ENCODE measurements at regions of chr9 and their contacts with region 1.

Region 1: DNA sequence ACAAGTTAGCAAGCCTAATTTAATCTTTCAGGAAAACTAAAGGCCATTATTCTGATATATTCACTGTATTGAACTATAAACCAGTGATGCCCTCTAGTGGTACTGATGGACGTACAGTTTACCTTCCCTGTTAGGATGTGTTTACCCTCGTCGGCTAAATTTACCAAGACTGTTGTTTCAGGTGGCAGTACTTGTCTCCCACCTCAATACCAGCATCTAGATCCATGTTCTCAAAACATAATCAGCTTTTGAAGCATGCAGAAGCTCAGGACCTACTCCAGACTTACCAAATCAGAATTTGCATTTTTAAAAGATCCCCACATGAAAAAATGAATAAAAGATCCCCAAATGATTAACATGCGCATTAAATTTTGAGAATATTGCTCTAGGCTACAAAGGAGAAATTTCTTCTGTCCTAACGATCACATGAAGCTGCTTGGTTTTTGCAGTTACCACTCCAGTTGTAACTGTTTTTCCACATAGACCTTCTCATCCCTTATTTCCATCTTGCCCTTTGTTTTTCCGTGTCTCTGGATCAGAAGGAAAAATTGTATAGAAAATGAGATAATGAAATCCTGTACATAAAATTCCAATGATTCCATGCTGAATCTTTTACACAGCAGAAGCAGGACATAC is 3.2 kb upstream of the BAAT start:
- DNase-seq: peak; percentile 58
- ATAC-seq: peak; percentile 97
- H3K4me3 ChIP-seq: no peak overlapping the region
- H3K27ac ChIP-seq: no peak overlapping the region
- H3K4me1 ChIP-seq: no peaks in the 10 kb centered on the region
- H3K27me3 ChIP-seq: no peaks in the 10 kb centered on the region
- CTCF ChIP-seq: peak; percentile 45 to 75 (median 70); a peak in 5 of 6 replicates
- POLR2A ChIP-seq: no peak
- RAD21 ChIP-seq: peak; percentile 47

Region 2: GRCh38 chr9:101376111-101376848 is 11.7 kb before region 1 on chr9:
- CTCF ChIA-PET with region 1: interaction called, 15 read pairs
- POLR2A ChIA-PET with region 1: no interaction called
- RAD21 ChIA-PET with region 1: no interaction called
- intact Hi-C with region 1: no loop called
- DNase-seq: no peak
- ATAC-seq: no peak
- H3K4me3 ChIP-seq: no peak overlapping the region
- H3K27ac ChIP-seq: no peak overlapping the region
- H3K4me1 ChIP-seq: no peaks in the 10 kb centered on the region
- H3K27me3 ChIP-seq: no peaks in the 10 kb centered on the region
- CTCF ChIP-seq: no peak
- POLR2A ChIP-seq: no peak
- RAD21 ChIP-seq: no peak

Region 3: DNA sequence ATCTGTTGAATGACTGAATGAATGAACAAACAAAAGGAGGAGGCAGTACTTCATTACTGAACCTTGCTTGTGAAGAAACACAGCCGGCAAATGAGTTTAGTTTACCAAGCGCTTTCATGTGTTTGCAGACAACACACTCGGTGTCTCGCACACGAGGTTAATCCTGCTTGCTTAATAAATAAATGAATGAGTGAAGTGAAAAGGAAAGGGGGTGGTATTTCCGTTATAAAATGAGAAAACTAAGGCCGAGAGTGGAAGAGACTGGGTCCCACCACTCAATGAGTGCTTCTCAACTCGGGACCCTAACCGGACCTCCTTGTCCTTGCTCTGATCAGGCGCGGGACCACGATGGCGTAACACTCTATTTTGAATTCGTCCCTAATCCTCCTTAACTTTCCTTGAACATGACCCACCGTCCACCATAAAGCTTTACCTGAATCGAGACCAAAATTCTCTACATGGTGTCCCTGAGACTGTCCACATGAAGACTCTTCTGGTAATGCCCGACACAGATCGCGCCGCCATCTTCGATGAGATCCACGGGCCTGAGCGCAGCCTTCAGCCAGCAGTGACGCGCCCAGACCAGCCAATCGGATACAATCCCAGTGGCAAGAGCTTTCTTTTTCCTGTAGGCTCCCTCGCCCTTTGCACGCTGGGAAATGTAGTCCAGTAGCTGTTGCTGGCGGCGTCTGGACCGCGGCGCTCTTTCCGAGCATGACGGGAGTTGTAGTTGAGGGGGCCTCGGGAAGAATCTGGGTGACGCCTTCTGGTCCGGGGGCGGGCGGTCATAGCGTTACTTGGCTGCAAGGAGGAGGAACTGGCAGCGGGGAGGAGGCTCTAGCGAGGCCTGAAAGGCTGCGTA is 10.3 kb after region 1 on chr9 and contains the starts of genes MRPL50 and ZNF189:
- CTCF ChIA-PET with region 1: interaction called, 18 read pairs
- POLR2A ChIA-PET with region 1: interaction called, 10 read pairs
- RAD21 ChIA-PET with region 1: interaction called in 1 of 2 experiments, 3 read pairs
- intact Hi-C with region 1: no loop called
- DNase-seq: peak; percentile 96
- ATAC-seq: peak; percentile 96
- H3K4me3 ChIP-seq: peak within 1 kb of the TSS; percentile 71 to 92
- H3K27ac ChIP-seq: peak within 1 kb of the TSS; percentile 44
- H3K4me1 ChIP-seq: peaks cover 3 to 10% of the 10 kb centered on the region in 2 experiments; a peak in 3 of 4 replicates
- H3K27me3 ChIP-seq: no peaks in the 10 kb centered on the region
- CTCF ChIP-seq: no peak
- POLR2A ChIP-seq: peak; percentile 79
- RAD21 ChIP-seq: no peak
- total RNA-seq, gene MRPL50: 14.6 TPM
- total RNA-seq, gene ZNF189: 10.6 TPM

Region 4: GRCh38 chr9:101409079-101409477 is 21.1 kb after region 1 on chr9:
- CTCF ChIA-PET with region 1: no interaction called
- POLR2A ChIA-PET with region 1: no interaction called
- RAD21 ChIA-PET with region 1: no interaction called
- intact Hi-C with region 1: no loop called
- DNase-seq: no peak
- ATAC-seq: no peak
- H3K4me3 ChIP-seq: no peak overlapping the region
- H3K27ac ChIP-seq: no peak overlapping the region
- H3K4me1 ChIP-seq: no peaks in the 10 kb centered on the region
- H3K27me3 ChIP-seq: no peaks in the 10 kb centered on the region
- CTCF ChIP-seq: no peak
- POLR2A ChIP-seq: no peak
- RAD21 ChIP-seq: no peak